ENCODE measurements at regions of chrX and their contacts with region 1.

Region 1: DNA sequence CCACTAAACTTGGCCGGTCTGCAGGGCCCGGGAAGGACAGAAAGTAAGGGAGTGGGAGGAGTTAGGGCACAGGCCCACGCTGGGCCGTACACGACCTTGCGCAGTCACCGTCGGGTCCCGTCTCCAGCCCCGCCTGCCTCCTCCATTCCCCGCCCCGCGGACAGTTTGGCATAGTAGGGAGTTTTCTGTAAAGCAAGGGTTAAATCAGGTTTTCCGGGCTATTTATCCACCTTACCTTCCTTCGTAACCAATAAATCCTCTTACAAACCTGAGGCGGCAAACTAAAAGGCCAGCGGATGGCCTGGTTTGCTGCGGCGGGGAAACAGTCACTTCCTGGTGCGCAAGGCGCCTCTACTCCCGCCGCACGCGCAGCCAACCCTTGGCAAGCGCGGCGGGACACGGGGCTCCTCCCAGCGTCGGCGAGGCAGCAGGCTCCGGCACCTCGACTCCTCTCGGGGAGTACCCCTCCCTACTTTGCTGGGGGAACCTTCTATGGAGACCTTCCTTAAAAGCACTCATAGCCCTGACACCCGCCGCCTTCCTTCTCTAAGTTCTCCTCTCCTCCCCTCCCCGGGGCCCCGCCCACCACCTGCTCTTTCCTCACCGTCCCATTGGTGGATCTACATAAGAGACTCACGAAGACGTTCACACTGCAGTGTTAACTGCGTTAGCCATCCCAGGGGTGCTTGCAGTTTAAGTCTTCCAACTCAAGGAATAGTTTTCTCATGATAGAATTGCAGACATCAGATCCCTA is at the start of gene TRMT2B:
- DNase-seq: peak; percentile 75 to 91 (median 81)
- H3K4me3 ChIP-seq: peak within 1 kb of the TSS; percentile 34 to 56
- H3K4me3 Mint-ChIP-seq: peak within 1 kb of the TSS; percentile 86 to 97 (median 90)
- H3K27ac ChIP-seq: peak within 1 kb of the TSS; percentile 87
- H3K27ac Mint-ChIP-seq: peak within 1 kb of the TSS; percentile 93 to 98 (median 97)
- H3K4me1 ChIP-seq: peaks cover 31% of the 10 kb centered on the region
- H3K4me1 Mint-ChIP-seq: peaks cover 15 to 42% (median 28%) of the 10 kb centered on the region in 4 donors
- H3K27me3 ChIP-seq: no peaks in the 10 kb centered on the region
- H3K27me3 Mint-ChIP-seq: no peaks in the 10 kb centered on the region
- total RNA-seq, gene TRMT2B: 44.1 to 52.5 TPM

Region 2: GRCh38 chrX:100819837-100820666 is 231.7 kb before region 1 on chrX and contains the start of gene CSTF2:
- CTCF ChIA-PET with region 1: no interaction called
- POLR2A ChIA-PET with region 1: no interaction called
- intact Hi-C with region 1: loop called (anchors 1 kb)
- DNase-seq: peak; percentile 82 to 90 (median 84)
- H3K4me3 ChIP-seq: peak within 1 kb of the TSS; percentile 74 to 81
- H3K4me3 Mint-ChIP-seq: peak within 1 kb of the TSS; percentile 84 to 92 (median 88)
- H3K27ac ChIP-seq: peak within 1 kb of the TSS; percentile 83
- H3K27ac Mint-ChIP-seq: peak within 1 kb of the TSS; percentile 80 to 99 (median 95)
- H3K4me1 ChIP-seq: peaks cover 4% of the 10 kb centered on the region
- H3K4me1 Mint-ChIP-seq: peaks cover 5 to 15% (median 8%) of the 10 kb centered on the region in 4 donors
- H3K27me3 ChIP-seq: no peaks in the 10 kb centered on the region
- H3K27me3 Mint-ChIP-seq: peaks cover 0 to 2% of the 10 kb centered on the region in 2 donors
- total RNA-seq, gene CSTF2: 14.7 to 15.2 TPM

Region 3: DNA sequence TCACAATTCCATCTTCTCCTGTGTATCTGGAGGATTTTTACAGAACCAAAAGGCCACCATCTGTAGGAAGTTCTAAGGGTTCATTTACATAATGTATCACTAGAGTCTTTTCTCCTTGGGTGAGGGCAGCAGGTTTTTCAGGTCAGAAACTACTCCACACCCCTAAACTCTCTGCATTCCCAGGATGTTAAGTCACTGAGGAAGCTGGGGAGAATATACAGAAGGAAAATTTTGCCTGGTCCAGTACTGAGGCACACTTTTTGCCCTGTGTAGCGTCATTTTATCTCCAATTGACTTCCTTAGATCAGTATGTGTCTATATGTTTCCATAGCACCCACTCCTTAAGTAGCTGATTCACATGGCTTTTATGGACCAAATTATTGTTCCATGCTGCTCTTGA is 140.0 kb before region 1 on chrX:
- CTCF ChIA-PET with region 1: no interaction called
- POLR2A ChIA-PET with region 1: no interaction called
- intact Hi-C with region 1: no loop called
- DNase-seq: no peak
- H3K4me3 ChIP-seq: no peak overlapping the region
- H3K4me3 Mint-ChIP-seq: no peak overlapping the region
- H3K27ac ChIP-seq: no peak overlapping the region
- H3K27ac Mint-ChIP-seq: no peak overlapping the region
- H3K4me1 ChIP-seq: no peaks in the 10 kb centered on the region
- H3K4me1 Mint-ChIP-seq: no peaks in the 10 kb centered on the region
- H3K27me3 ChIP-seq: no peaks in the 10 kb centered on the region
- H3K27me3 Mint-ChIP-seq: no peaks in the 10 kb centered on the region

Region 4: DNA sequence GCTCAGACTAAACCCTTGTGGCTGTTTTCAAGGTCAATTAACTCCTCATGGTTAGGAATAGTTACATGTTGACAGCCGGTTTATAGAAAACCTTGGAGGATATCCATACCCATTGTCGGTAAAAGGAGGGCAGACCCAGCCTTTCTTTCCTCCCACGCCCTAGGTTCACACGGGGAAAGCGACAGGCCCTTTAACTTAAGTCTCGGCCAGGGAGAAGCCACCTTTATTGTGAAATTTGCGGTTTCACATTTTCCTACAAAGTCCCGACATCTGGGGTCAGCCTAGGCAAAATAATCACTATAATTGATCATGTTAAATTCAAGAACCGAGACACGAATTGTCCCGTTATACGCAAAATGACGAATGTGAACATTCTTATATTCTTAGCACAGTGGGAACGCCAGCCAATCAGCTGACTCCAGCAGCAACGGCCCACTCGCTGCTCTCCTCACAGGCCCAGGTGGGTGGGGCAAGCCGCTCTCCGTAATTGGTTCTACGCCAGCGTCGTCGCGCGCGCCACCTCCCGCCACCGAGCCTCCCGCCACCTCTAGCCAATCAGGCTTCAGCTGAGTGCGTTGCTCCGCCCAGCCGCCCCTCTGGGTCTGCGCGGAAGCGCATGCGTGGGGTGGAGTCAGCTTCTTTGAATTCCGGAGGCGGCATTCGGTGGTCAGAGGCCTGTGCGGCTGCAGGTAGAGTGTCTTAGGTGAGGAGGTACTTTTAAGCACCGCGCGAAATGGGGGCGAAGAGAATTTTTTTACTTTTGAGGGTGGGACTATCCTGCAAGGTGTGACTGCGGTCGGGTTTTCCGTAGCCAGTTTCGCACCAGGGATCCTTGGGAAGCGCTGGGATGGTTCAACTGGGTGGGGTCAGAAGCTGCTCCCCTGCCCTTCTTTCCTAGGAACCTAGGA is 46.1 kb after region 1 on chrX and contains the start of gene CENPI:
- CTCF ChIA-PET with region 1: interaction called, 3 read pairs
- POLR2A ChIA-PET with region 1: interaction called, 3 read pairs
- intact Hi-C with region 1: loop called (anchors 1 kb)
- DNase-seq: peak; percentile 93 to 94 (median 94)
- H3K4me3 ChIP-seq: peak within 1 kb of the TSS; percentile 68 to 73
- H3K4me3 Mint-ChIP-seq: peak within 1 kb of the TSS; percentile 88 to 94 (median 90)
- H3K27ac ChIP-seq: peak within 1 kb of the TSS; percentile 68
- H3K27ac Mint-ChIP-seq: peak within 1 kb of the TSS; percentile 91 to 96 (median 96)
- H3K4me1 ChIP-seq: peaks cover 6% of the 10 kb centered on the region
- H3K4me1 Mint-ChIP-seq: peaks cover 6 to 16% (median 11%) of the 10 kb centered on the region in 4 donors
- H3K27me3 ChIP-seq: no peaks in the 10 kb centered on the region
- H3K27me3 Mint-ChIP-seq: no peaks in the 10 kb centered on the region
- total RNA-seq, gene CENPI: 0.64 to 0.96 TPM

Region 5: GRCh38 chrX:101287402-101287801 is 235.7 kb after region 1 on chrX:
- CTCF ChIA-PET with region 1: no interaction called
- POLR2A ChIA-PET with region 1: no interaction called
- intact Hi-C with region 1: loop called (anchors 5 kb)
- DNase-seq: peak in 4 of 5 donors; percentile 23 to 31 (median 28)
- H3K4me3 ChIP-seq: no peak overlapping the region
- H3K4me3 Mint-ChIP-seq: no peak overlapping the region
- H3K27ac ChIP-seq: no peak overlapping the region
- H3K27ac Mint-ChIP-seq: no peak overlapping the region
- H3K4me1 ChIP-seq: no peaks in the 10 kb centered on the region
- H3K4me1 Mint-ChIP-seq: peaks cover 0 to 1% (median 0%) of the 10 kb centered on the region in 4 donors
- H3K27me3 ChIP-seq: no peaks in the 10 kb centered on the region
- H3K27me3 Mint-ChIP-seq: no peaks in the 10 kb centered on the region

Region 6: DNA sequence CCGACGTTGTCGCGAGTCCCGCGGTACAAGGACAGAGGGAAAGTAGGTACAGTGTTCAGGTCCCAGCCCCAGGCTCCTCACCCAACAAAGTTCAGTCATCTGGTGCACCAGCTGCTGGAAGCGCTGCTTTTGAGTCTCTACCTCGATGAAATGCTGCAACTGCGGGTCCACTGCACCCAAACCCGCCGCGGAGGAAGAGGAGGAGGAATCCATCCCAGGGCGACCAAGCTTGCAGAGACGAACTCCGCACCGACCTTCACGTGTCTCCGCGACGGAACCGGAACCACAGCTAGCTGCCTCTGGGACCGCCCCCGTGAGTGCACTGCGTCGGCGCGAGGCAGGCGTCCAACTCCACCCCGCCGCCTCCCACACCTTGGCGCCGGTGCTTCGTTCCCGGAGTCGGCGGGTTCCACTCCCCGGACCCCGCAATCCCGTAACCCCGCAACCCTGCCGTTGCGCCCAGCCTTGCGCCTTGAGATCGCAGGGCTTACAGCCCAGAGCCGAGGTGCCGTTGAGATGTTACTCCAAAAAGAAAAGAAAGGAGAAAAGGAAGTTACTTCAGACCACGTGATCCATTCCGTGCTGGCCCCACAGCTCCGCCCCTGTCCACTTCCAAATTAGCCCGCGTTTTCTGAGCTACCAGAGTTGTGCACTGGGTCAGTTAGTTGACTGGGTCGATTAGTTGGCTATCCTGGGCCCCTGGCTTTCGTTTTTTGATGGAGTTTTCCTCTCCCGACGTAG is 296.9 kb after region 1 on chrX and contains the start of gene TIMM8A:
- CTCF ChIA-PET with region 1: no interaction called
- POLR2A ChIA-PET with region 1: no interaction called
- intact Hi-C with region 1: loop called (anchors 2 kb)
- DNase-seq: peak; percentile 73 to 78 (median 74)
- H3K4me3 ChIP-seq: peak within 1 kb of the TSS; percentile 69 to 74
- H3K4me3 Mint-ChIP-seq: peak within 1 kb of the TSS; percentile 88 to 94 (median 91)
- H3K27ac ChIP-seq: peak within 1 kb of the TSS; percentile 72
- H3K27ac Mint-ChIP-seq: peak within 1 kb of the TSS; percentile 85 to 97 (median 92)
- H3K4me1 ChIP-seq: peaks cover 19% of the 10 kb centered on the region
- H3K4me1 Mint-ChIP-seq: peaks cover 5 to 21% (median 11%) of the 10 kb centered on the region in 4 donors
- H3K27me3 ChIP-seq: no peaks in the 10 kb centered on the region
- H3K27me3 Mint-ChIP-seq: no peaks in the 10 kb centered on the region
- total RNA-seq, gene TIMM8A: 12.0 to 13.3 TPM

Region 7: GRCh38 chrX:101617211-101618191 is 565.8 kb after region 1 on chrX and contains the start of gene ARMCX6:
- CTCF ChIA-PET with region 1: no interaction called
- POLR2A ChIA-PET with region 1: no interaction called
- intact Hi-C with region 1: loop called (anchors 5 kb)
- DNase-seq: peak; percentile 66 to 82 (median 68)
- H3K4me3 ChIP-seq: peak within 1 kb of the TSS; percentile 47 to 82
- H3K4me3 Mint-ChIP-seq: peak within 1 kb of the TSS; percentile 90 to 97 (median 95)
- H3K27ac ChIP-seq: peak within 1 kb of the TSS; percentile 65
- H3K27ac Mint-ChIP-seq: peak within 1 kb of the TSS; percentile 86 to 97 (median 94)
- H3K4me1 ChIP-seq: peaks cover 14% of the 10 kb centered on the region
- H3K4me1 Mint-ChIP-seq: peaks cover 3 to 22% (median 7%) of the 10 kb centered on the region in 4 donors
- H3K27me3 ChIP-seq: no peaks in the 10 kb centered on the region
- H3K27me3 Mint-ChIP-seq: no peaks in the 10 kb centered on the region
- total RNA-seq, gene ARMCX6: 36.6 to 40.5 TPM